ENCODE measurements at regions of chr17 and their contacts with region 1.

Region 1: GRCh38 chr17:50841949-50842354 is 6.6 kb downstream of the WFIKKN2 start:
- DNase-seq: no peak
- H3K4me3 ChIP-seq: no peak overlapping the region
- CTCF ChIP-seq: peak; percentile 91

Region 2: GRCh38 chr17:50783193-50783660 is 58.7 kb before region 1 on chr17:
- CTCF ChIA-PET with region 1: interaction called, 516 read pairs
- POLR2A ChIA-PET with region 1: no interaction called
- DNase-seq: no peak
- H3K4me3 ChIP-seq: no peak overlapping the region
- CTCF ChIP-seq: peak; percentile 99

Region 3: DNA sequence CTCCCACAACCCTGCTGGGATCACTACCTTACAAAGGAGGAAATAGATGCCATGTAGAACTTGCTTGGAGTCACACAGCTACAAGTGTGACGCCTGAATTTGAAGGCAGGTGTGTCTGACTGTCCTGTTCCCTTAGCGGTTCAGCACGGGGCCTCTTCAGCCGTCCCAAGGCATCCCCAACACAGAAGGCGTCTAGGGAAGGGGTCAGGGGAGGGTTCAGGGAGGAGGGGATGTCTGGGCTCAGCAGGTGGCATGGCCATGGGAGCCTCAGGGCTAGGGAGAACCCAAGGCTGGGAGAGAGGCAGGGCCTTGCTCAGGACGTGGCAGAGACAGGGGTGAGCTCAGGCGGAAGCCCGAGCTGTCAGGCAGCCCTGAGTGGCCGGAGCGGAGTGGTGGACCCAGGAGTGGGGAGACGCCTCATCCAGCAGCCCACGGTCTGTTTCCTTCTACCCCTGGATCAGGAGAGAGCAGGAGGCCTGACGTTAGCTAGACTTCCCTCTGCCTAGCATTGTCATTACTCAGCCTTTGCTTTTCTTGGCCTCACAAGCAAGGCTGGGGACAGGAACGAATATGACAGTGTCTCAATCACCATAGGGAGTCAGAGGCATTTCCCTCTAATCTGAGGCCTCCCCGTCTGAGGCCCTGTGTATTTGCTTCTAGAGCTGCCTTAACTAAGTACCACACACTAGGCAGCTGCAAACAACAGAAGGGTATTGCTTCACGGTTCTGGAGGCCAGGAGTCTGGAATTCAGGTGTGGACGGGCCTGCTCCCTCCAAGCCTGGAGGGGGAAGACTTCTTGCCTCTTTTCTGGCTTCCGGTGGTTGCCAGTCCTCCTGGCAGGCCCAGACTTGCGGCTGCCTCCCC is 43.3 kb before region 1 on chr17:
- CTCF ChIA-PET with region 1: interaction called, 22 read pairs
- POLR2A ChIA-PET with region 1: no interaction called
- DNase-seq: no peak
- H3K4me3 ChIP-seq: no peak overlapping the region
- CTCF ChIP-seq: no peak

Region 4: GRCh38 chr17:50828508-50829170 is 13.3 kb before region 1 on chr17:
- CTCF ChIA-PET with region 1: interaction called, 30 read pairs
- POLR2A ChIA-PET with region 1: no interaction called
- DNase-seq: no peak
- H3K4me3 ChIP-seq: no peak overlapping the region
- CTCF ChIP-seq: no peak

Region 5: DNA sequence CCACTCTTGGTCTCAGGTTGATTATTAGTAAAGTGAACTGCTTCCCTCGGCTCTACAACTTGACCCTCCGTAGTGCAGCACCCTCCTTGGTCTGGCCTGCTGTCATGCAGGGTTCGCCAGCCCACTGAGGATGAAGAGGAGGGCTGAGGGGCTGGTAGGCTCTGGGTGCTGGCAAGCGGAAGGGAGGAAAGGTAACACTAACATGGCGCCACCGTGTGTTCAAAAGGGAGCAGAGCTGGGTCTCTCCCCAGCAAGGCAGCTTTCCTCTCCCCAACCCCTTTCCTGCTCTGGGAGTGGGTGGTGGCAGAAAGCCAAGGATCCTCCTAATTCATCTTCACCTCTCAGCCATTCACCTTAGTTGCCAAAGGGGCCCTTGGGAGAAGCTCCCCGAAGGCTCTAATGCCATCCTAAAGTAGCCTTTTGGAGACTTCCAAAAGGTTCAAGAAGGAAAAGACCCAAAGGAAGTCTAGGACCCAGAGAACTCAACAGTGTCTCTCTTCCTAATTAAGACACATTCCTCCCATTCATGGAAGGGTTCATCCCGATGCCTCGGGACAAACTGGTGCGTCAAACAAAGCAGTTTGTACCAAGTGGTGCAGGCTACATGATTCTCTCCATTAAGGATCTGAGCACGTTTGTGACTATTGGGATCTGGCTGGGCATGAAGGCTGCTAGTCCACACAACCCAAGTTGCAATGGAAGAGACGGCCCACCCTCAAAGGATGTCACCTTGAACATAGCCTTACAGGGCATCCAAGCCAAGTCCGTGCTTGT is 115.0 kb after region 1 on chr17:
- CTCF ChIA-PET with region 1: interaction called, 758 read pairs
- POLR2A ChIA-PET with region 1: no interaction called
- DNase-seq: no peak
- H3K4me3 ChIP-seq: no peak overlapping the region
- CTCF ChIP-seq: peak; percentile 77

Measured in AG04449 (cell line).